HAP-1 (cell line): ENCODE measurements at regions of chr16 and their contacts with region 1.

Region 1: DNA sequence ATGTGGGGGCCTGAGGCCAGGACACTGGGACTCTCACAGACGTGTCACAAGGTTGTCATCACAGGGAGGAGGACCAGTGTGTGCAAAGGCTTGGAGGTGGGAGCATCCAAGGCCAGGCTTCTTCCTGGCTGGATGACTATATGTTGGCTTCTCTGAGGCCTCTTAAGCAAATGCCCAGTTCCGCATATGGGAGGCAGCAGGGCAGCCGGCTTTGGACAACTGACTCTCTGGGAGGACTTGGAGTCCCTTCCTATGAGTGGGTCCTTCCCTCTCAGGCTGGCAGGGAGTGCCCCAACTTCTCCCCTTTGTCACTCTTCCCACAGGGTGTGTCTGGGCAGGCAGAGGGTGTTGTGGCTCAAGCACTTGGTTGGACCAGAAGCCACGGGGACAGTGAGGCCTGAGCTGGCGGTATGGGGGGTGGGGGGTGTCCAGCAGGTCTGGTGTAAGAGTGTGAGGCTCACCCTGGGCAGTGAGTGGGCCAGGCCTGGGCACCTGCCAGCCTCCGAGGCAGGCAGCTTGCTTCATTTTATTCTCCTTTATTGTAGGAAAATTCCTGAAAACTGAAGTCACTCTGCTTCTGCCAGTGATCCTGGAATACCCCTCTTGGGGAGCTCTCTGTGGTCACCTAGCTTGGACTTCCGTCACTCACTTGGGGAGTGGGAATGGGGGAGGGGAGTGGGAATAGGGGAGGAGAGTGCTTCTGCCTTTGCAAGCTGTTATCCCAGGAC is 14.9 kb downstream of the ADGRG1 start:
- DNase-seq: no peak
- H3K4me3 ChIP-seq: no peak overlapping the region
- H3K4me1 ChIP-seq: no peaks in the 10 kb centered on the region
- H3K27me3 ChIP-seq: no peaks in the 10 kb centered on the region

Region 2: GRCh38 chr16:57576429-57576870 is 66.9 kb before region 1 on chr16:
- in situ Hi-C with region 1: loop called (anchors 5 kb)
- DNase-seq: peak; percentile 54 to 86
- H3K4me3 ChIP-seq: no peak overlapping the region
- H3K4me1 ChIP-seq: no peaks in the 10 kb centered on the region
- H3K27me3 ChIP-seq: no peaks in the 10 kb centered on the region